ENCODE measurements at regions of chr2 and their contacts with region 1.

Region 1: GRCh38 chr2:98771721-98772524 is 41.0 kb upstream of the MGAT4A start:
- DNase-seq: peak; percentile 45 to 92 (median 64)
- ATAC-seq: peak; percentile 70
- H3K4me3 ChIP-seq: peak overlapping the region; percentile 60
- H3K4me3 Mint-ChIP-seq: peak overlapping the region; percentile 94
- H3K27ac ChIP-seq: peak overlapping the region; percentile 86 to 90
- H3K27ac Mint-ChIP-seq: peak overlapping the region; percentile 96
- H3K4me1 ChIP-seq: peaks cover 86% of the 10 kb centered on the region
- H3K4me1 Mint-ChIP-seq: peaks cover 84% of the 10 kb centered on the region
- H3K27me3 ChIP-seq: no peaks in the 10 kb centered on the region
- H3K27me3 Mint-ChIP-seq: no peaks in the 10 kb centered on the region
- CTCF ChIP-seq: no peak

Region 2: GRCh38 chr2:98577313-98577712 is 194.6 kb before region 1 on chr2:
- CTCF ChIA-PET with region 1: no interaction called
- POLR2A ChIA-PET with region 1: no interaction called
- intact Hi-C with region 1: no loop called
- DNase-seq: no peak
- ATAC-seq: no peak
- H3K4me3 ChIP-seq: no peak overlapping the region
- H3K4me3 Mint-ChIP-seq: no peak overlapping the region
- H3K27ac ChIP-seq: no peak overlapping the region
- H3K27ac Mint-ChIP-seq: no peak overlapping the region
- H3K4me1 ChIP-seq: no peaks in the 10 kb centered on the region
- H3K4me1 Mint-ChIP-seq: no peaks in the 10 kb centered on the region
- H3K27me3 ChIP-seq: no peaks in the 10 kb centered on the region
- H3K27me3 Mint-ChIP-seq: no peaks in the 10 kb centered on the region
- CTCF ChIP-seq: no peak

Region 3: DNA sequence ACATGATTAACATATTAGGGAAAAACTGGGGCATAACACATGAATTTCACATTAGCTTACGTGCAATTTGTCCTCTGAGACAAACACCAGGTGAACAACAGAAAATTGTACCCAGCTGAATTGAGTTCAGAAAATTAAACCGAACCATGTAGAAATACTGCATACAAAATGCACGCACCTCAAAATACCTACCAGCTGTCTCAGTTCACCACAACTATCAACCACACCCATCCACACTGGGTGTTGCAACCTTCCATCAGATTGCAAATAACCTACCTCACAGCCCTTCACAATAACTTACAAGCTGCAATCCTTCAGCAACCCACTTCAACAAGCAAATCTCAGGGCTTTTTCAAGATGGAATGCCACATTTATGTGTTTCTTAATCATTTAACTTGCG is 107.6 kb before region 1 on chr2:
- CTCF ChIA-PET with region 1: interaction called, 4 read pairs
- POLR2A ChIA-PET with region 1: interaction called, 94 read pairs
- intact Hi-C with region 1: no loop called
- DNase-seq: peak in 11 of 14 experiments; percentile 39 to 85 (median 52)
- ATAC-seq: peak; percentile 78
- H3K4me3 ChIP-seq: peak overlapping the region; percentile 44
- H3K4me3 Mint-ChIP-seq: peak overlapping the region; percentile 87
- H3K27ac ChIP-seq: peak overlapping the region; percentile 58 to 76
- H3K27ac Mint-ChIP-seq: peak overlapping the region; percentile 92
- H3K4me1 ChIP-seq: peaks cover 44% of the 10 kb centered on the region
- H3K4me1 Mint-ChIP-seq: peaks cover 78% of the 10 kb centered on the region
- H3K27me3 ChIP-seq: no peaks in the 10 kb centered on the region
- H3K27me3 Mint-ChIP-seq: no peaks in the 10 kb centered on the region
- CTCF ChIP-seq: no peak

Region 4: GRCh38 chr2:98713332-98714015 is 58.4 kb before region 1 on chr2:
- CTCF ChIA-PET with region 1: no interaction called
- POLR2A ChIA-PET with region 1: interaction called, 16 read pairs
- intact Hi-C with region 1: no loop called
- DNase-seq: no peak
- ATAC-seq: no peak
- H3K4me3 ChIP-seq: no peak overlapping the region
- H3K4me3 Mint-ChIP-seq: peak overlapping the region; percentile 62
- H3K27ac ChIP-seq: no peak overlapping the region
- H3K27ac Mint-ChIP-seq: peak overlapping the region; percentile 72
- H3K4me1 ChIP-seq: peaks cover 81% of the 10 kb centered on the region
- H3K4me1 Mint-ChIP-seq: peaks cover 96% of the 10 kb centered on the region
- H3K27me3 ChIP-seq: no peaks in the 10 kb centered on the region
- H3K27me3 Mint-ChIP-seq: no peaks in the 10 kb centered on the region
- CTCF ChIP-seq: no peak

Region 5: DNA sequence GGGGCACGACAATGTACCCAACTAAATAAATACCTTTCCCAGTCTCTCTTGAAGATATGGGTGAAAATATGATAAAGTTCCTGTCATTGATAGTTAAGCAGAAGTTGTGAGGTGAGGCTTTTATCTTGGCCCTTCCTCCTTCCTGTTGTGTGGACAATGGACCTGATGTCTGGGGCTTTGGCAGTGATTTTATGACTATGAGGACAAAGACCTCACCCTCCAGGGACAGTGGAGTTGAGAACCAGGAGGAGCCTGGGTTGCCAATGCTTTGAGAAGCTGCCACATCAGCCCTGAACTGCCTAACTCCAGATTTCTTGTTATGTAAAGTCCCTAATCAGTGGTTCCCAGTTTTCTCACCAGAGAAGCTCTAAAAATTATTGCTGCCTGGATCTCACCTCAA is 20.2 kb before region 1 on chr2:
- CTCF ChIA-PET with region 1: interaction called, 6 read pairs
- POLR2A ChIA-PET with region 1: interaction called, 129 read pairs
- intact Hi-C with region 1: loop called in 1 of 2 experiments (anchors 2 kb)
- DNase-seq: no peak
- ATAC-seq: no peak
- H3K4me3 ChIP-seq: no peak overlapping the region
- H3K4me3 Mint-ChIP-seq: no peak overlapping the region
- H3K27ac ChIP-seq: no peak overlapping the region
- H3K27ac Mint-ChIP-seq: no peak overlapping the region
- H3K4me1 ChIP-seq: peaks cover 39% of the 10 kb centered on the region
- H3K4me1 Mint-ChIP-seq: peaks cover 61% of the 10 kb centered on the region
- H3K27me3 ChIP-seq: no peaks in the 10 kb centered on the region
- H3K27me3 Mint-ChIP-seq: no peaks in the 10 kb centered on the region
- CTCF ChIP-seq: no peak

Region 6: GRCh38 chr2:98822301-98823164 is 50.6 kb after region 1 on chr2:
- CTCF ChIA-PET with region 1: interaction called, 7 read pairs
- POLR2A ChIA-PET with region 1: interaction called, 46 read pairs
- intact Hi-C with region 1: loop called (anchors 2 to 5 kb)
- DNase-seq: peak; percentile 33 to 87 (median 56)
- ATAC-seq: peak; percentile 91
- H3K4me3 ChIP-seq: peak overlapping the region; percentile 57
- H3K4me3 Mint-ChIP-seq: peak overlapping the region; percentile 62
- H3K27ac ChIP-seq: no peak overlapping the region
- H3K27ac Mint-ChIP-seq: no peak overlapping the region
- H3K4me1 ChIP-seq: peaks cover 29% of the 10 kb centered on the region
- H3K4me1 Mint-ChIP-seq: peaks cover 53% of the 10 kb centered on the region
- H3K27me3 ChIP-seq: no peaks in the 10 kb centered on the region
- H3K27me3 Mint-ChIP-seq: no peaks in the 10 kb centered on the region
- CTCF ChIP-seq: peak; percentile 43

Region 7: DNA sequence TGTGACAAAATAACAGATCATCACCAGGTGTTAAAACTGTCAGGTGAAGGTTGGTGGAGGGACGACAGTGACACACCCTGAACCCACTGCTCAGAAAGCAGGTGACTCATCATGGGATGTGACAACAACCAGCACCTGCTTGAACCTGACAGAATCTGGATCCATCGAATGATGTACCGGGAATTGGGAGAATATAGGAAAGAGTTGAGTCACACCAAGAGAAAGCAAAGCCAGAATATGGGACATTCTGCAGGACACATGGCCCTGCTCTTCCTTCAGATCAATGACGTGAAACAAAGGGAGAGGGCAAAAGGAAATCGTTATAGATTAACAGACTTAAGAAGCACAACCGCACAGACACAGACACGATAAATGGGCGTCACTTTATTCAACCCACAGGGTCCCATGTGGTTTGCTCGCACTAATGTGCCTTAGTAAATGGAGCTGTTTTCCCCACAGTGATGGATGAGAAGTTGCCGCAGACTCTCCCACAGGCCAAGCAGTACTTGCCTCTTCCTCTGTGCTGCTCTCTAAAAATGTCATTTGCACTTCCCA is 64.0 kb after region 1 on chr2:
- CTCF ChIA-PET with region 1: interaction called, 9 read pairs
- POLR2A ChIA-PET with region 1: interaction called, 17 read pairs
- intact Hi-C with region 1: loop called in 1 of 2 experiments (anchors 1 kb)
- DNase-seq: peak; percentile 36 to 88 (median 51)
- ATAC-seq: peak; percentile 85
- H3K4me3 ChIP-seq: no peak overlapping the region
- H3K4me3 Mint-ChIP-seq: peak overlapping the region; percentile 57
- H3K27ac ChIP-seq: peak overlapping the region; percentile 27 to 48
- H3K27ac Mint-ChIP-seq: peak overlapping the region; percentile 94
- H3K4me1 ChIP-seq: peaks cover 42% of the 10 kb centered on the region
- H3K4me1 Mint-ChIP-seq: peaks cover 46% of the 10 kb centered on the region
- H3K27me3 ChIP-seq: no peaks in the 10 kb centered on the region
- H3K27me3 Mint-ChIP-seq: no peaks in the 10 kb centered on the region
- CTCF ChIP-seq: no peak

Region 8: GRCh38 chr2:98846041-98846440 is 74.1 kb after region 1 on chr2:
- CTCF ChIA-PET with region 1: no interaction called
- POLR2A ChIA-PET with region 1: no interaction called
- intact Hi-C with region 1: no loop called
- DNase-seq: no peak
- ATAC-seq: no peak
- H3K4me3 ChIP-seq: no peak overlapping the region
- H3K4me3 Mint-ChIP-seq: no peak overlapping the region
- H3K27ac ChIP-seq: no peak overlapping the region
- H3K27ac Mint-ChIP-seq: no peak overlapping the region
- H3K4me1 ChIP-seq: no peaks in the 10 kb centered on the region
- H3K4me1 Mint-ChIP-seq: no peaks in the 10 kb centered on the region
- H3K27me3 ChIP-seq: peaks cover 3 to 6% of the 10 kb centered on the region in 2 experiments
- H3K27me3 Mint-ChIP-seq: peaks cover 10% of the 10 kb centered on the region
- CTCF ChIP-seq: no peak

Region 9: GRCh38 chr2:99430614-99431291 is 658.8 kb after region 1 on chr2:
- CTCF ChIA-PET with region 1: no interaction called
- POLR2A ChIA-PET with region 1: no interaction called
- intact Hi-C with region 1: no loop called
- DNase-seq: no peak
- ATAC-seq: no peak
- H3K4me3 ChIP-seq: no peak overlapping the region
- H3K4me3 Mint-ChIP-seq: no peak overlapping the region
- H3K27ac ChIP-seq: no peak overlapping the region
- H3K27ac Mint-ChIP-seq: peak overlapping the region; percentile 10
- H3K4me1 ChIP-seq: no peaks in the 10 kb centered on the region
- H3K4me1 Mint-ChIP-seq: peaks cover 19% of the 10 kb centered on the region
- H3K27me3 ChIP-seq: no peaks in the 10 kb centered on the region
- H3K27me3 Mint-ChIP-seq: no peaks in the 10 kb centered on the region
- CTCF ChIP-seq: no peak

Measured in CD4-positive, alpha-beta T cell (primary cell).